Calu3 (cell line): ENCODE measurements at regions of chr6 and their contacts with region 1.

Region 1: GRCh38 chr6:141677598-141678211 is 455.0 kb upstream of the GJE1 start:
- DNase-seq: peak; percentile 8
- H3K4me3 Mint-ChIP-seq: no peak overlapping the region
- H3K27ac Mint-ChIP-seq: no peak overlapping the region
- H3K4me1 Mint-ChIP-seq: peaks cover 8% of the 10 kb centered on the region
- H3K27me3 Mint-ChIP-seq: no peaks in the 10 kb centered on the region
- CTCF ChIP-seq: peak; percentile 30

Region 2: GRCh38 chr6:142112451-142113061 is 434.9 kb after region 1 on chr6:
- CTCF ChIA-PET with region 1: no interaction called
- intact Hi-C with region 1: loop called (anchors 2 kb)
- DNase-seq: peak; percentile 70
- H3K4me3 Mint-ChIP-seq: no peak overlapping the region
- H3K27ac Mint-ChIP-seq: no peak overlapping the region
- H3K4me1 Mint-ChIP-seq: no peaks in the 10 kb centered on the region
- H3K27me3 Mint-ChIP-seq: no peaks in the 10 kb centered on the region
- CTCF ChIP-seq: peak; percentile 38